Heart right ventricle (tissue), 16 donors: ENCODE measurements at regions of chr17 and their contacts with region 1.

Region 1: GRCh38 chr17:77772461-77772897 is 186.0 kb upstream of the TNRC6C start:
- DNase-seq: peak; percentile 73 to 76
- ATAC-seq: peak; percentile 84 to 95 (median 92)
- H3K4me3 ChIP-seq: no peak overlapping the region
- H3K27ac ChIP-seq: peak overlapping the region in 6 of 10 donors; percentile 2 to 53 (median 22)
- H3K4me1 ChIP-seq: peaks cover 8 to 16% (median 13%) of the 10 kb centered on the region in 9 donors
- H3K27me3 ChIP-seq: no peaks in the 10 kb centered on the region
- CTCF ChIP-seq: peak; percentile 56 to 90 (median 80)

Region 2: DNA sequence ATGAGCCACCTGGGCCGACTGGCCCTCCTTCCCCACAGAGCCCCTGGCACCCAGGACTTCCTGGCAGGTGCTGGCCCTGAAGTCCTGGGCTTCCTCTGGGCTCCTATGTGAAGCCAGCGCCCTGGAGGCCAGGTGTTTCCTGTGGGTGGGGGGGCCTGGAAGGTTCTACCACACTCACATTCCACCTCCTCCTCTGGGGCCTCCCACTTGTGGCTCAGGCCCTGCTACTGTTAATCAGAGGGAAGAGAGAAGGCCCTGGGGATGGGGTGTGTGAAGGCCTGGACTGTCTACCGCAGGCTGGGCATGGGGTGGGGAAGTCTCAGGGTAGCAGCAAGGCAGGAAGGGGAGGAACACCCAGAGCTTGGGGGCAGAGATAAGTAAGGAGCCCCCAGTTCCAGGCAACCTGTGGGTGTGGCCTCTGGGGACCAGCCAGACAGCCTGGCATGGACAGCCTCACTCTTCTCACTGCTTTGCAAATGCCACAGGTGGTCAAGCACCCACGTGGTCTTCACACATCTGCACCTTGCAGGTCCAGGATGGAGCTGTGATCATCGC is 74.1 kb after region 1 on chr17:
- intact Hi-C with region 1: no loop called
- DNase-seq: no peak
- ATAC-seq: peak in 5 of 8 donors; percentile 14 to 33 (median 19)
- H3K4me3 ChIP-seq: no peak overlapping the region
- H3K27ac ChIP-seq: peak overlapping the region in 1 of 10 donors; percentile 38
- H3K4me1 ChIP-seq: peaks cover 0 to 36% (median 19%) of the 10 kb centered on the region in 9 donors
- H3K27me3 ChIP-seq: no peaks in the 10 kb centered on the region
- CTCF ChIP-seq: no peak

Region 3: GRCh38 chr17:77881545-77881944 is 109.1 kb after region 1 on chr17:
- intact Hi-C with region 1: loop called in 3 of 10 experiments (anchors 2 to 10 kb)
- DNase-seq: peak; percentile 89
- ATAC-seq: peak; percentile 83 to 94 (median 92)
- H3K4me3 ChIP-seq: peak overlapping the region in 2 of 10 donors; percentile 10 to 13
- H3K27ac ChIP-seq: peak overlapping the region in 9 of 10 donors; percentile 58 to 93 (median 77)
- H3K4me1 ChIP-seq: peaks cover 25 to 57% (median 37%) of the 10 kb centered on the region in 9 donors
- H3K27me3 ChIP-seq: no peaks in the 10 kb centered on the region
- CTCF ChIP-seq: no peak

Region 4: DNA sequence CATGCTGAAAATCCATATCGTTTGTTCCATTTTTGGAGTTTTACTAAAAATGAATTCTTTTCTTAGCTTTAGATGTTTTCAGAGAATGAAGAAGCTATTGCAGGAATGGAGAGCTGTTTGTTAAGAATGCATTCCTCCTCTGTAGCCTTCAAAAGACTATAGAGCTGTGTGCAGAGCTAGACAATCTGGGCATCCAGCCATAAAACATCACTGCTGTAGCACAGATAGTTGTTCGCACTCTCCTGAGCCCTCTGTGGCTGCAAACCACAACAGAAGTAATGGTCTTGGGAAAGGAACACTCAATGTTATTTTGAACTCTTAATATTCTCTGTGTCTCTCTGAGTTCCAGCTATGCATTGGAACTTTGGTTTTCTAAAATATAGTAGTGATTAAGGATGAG is 191.0 kb after region 1 on chr17:
- intact Hi-C with region 1: loop called in 5 of 10 experiments (anchors 5 to 10 kb)
- DNase-seq: peak in 1 of 2 donors; percentile 79
- ATAC-seq: peak; percentile 58 to 86 (median 72)
- H3K4me3 ChIP-seq: no peak overlapping the region
- H3K27ac ChIP-seq: peak overlapping the region in 3 of 10 donors; percentile 10 to 35 (median 16)
- H3K4me1 ChIP-seq: peaks cover 2 to 86% (median 70%) of the 10 kb centered on the region in 9 donors
- H3K27me3 ChIP-seq: peaks cover 0 to 13% (median 0%) of the 10 kb centered on the region in 7 donors
- CTCF ChIP-seq: no peak